Esophagus squamous epithelium (tissue), 5 donors: ENCODE measurements at regions of chr2 and their contacts with region 1.

Region 1: GRCh38 chr2:7044261-7045250 is 127.3 kb downstream of the RNF144A start:
- DNase-seq: no peak
- H3K4me3 ChIP-seq: no peak overlapping the region
- H3K27ac ChIP-seq: no peak overlapping the region
- H3K4me1 ChIP-seq: peaks cover 0 to 3% (median 0%) of the 10 kb centered on the region in 3 donors
- H3K27me3 ChIP-seq: no peaks in the 10 kb centered on the region
- CTCF ChIP-seq: peak; percentile 84 to 93 (median 91)
- POLR2A ChIP-seq: no peak

Region 2: GRCh38 chr2:6826081-6826913 is 218.3 kb before region 1 on chr2:
- intact Hi-C with region 1: loop called (anchors 5 kb)
- DNase-seq: no peak
- H3K4me3 ChIP-seq: no peak overlapping the region
- H3K27ac ChIP-seq: no peak overlapping the region
- H3K4me1 ChIP-seq: peaks cover 0 to 17% (median 0%) of the 10 kb centered on the region in 3 donors
- H3K27me3 ChIP-seq: no peaks in the 10 kb centered on the region
- CTCF ChIP-seq: peak; percentile 23 to 78 (median 52)
- POLR2A ChIP-seq: no peak

Region 3: GRCh38 chr2:6896930-6897759 is 147.4 kb before region 1 on chr2:
- intact Hi-C with region 1: loop called (anchors 10 kb)
- DNase-seq: no peak
- H3K4me3 ChIP-seq: no peak overlapping the region
- H3K27ac ChIP-seq: no peak overlapping the region
- H3K4me1 ChIP-seq: no peaks in the 10 kb centered on the region
- H3K27me3 ChIP-seq: no peaks in the 10 kb centered on the region
- CTCF ChIP-seq: peak; percentile 37 to 74 (median 64)
- POLR2A ChIP-seq: no peak

Region 4: GRCh38 chr2:7140306-7140705 is 95.8 kb after region 1 on chr2:
- intact Hi-C with region 1: no loop called
- DNase-seq: no peak
- H3K4me3 ChIP-seq: no peak overlapping the region
- H3K27ac ChIP-seq: no peak overlapping the region
- H3K4me1 ChIP-seq: no peaks in the 10 kb centered on the region
- H3K27me3 ChIP-seq: no peaks in the 10 kb centered on the region
- CTCF ChIP-seq: no peak
- POLR2A ChIP-seq: no peak